CD4-positive, alpha-beta T cell (primary cell): ENCODE measurements at regions of chr19 and their contacts with region 1.

Region 1: DNA sequence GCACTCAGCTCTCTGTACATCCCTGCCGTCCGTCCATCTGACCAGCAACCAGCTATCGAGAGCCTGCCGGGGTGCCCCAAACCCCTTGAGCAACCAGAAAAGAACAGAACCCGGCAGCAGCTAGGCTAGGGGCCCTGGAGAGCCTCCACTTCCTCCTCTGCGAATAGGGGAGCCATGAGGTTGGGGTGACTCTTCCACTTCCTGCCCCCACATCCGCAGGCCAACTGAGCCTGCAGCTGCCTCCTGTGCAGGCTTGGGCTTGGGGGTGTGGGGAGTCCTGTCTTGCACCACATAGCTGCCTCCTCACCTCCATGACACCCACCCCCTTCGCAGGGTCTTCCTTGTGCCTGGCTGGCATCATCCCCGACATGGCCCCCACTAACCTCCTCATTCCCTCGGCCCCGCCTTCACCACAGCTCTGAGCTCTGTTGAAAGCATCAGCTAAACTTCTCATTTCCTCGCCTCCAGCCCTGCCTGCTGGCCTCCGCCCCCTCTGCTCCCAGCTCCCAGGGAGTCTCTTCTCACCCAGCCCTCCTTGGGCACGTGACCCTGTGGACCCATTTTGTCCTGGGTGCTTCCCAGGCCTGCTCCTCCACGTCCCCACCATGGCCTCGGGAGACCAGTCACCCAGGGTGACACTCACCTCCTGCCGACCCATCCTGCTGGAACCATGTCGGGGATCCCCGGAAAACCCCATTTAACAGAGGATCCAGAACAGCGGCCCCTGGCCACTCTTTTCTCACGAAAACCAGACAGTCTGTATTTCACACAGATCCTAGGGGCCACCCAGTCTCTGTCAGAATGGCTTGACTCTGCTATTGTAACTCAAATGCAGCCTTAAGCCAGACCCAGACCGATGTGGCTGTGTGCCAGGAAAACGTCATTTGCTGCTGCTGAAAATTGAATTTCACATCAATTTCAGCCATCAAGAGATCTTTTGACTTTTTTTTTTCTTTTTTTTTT is 50.4 kb downstream of the MYO9B start:
- DNase-seq: peak; percentile 55 to 91 (median 74)
- ATAC-seq: peak; percentile 85
- H3K4me3 ChIP-seq: peak overlapping the region; percentile 39
- H3K4me3 Mint-ChIP-seq: peak overlapping the region; percentile 86
- H3K27ac ChIP-seq: peak overlapping the region; percentile 86 to 87
- H3K27ac Mint-ChIP-seq: peak overlapping the region; percentile 97
- H3K4me1 ChIP-seq: peaks cover 54% of the 10 kb centered on the region
- H3K4me1 Mint-ChIP-seq: peaks cover 51% of the 10 kb centered on the region
- H3K27me3 ChIP-seq: no peaks in the 10 kb centered on the region
- H3K27me3 Mint-ChIP-seq: no peaks in the 10 kb centered on the region
- CTCF ChIP-seq: no peak

Region 2: GRCh38 chr19:17090583-17090982 is 35.4 kb before region 1 on chr19:
- CTCF ChIA-PET with region 1: no interaction called
- POLR2A ChIA-PET with region 1: interaction called, 3 read pairs
- intact Hi-C with region 1: loop called in 1 of 2 experiments (anchors 5 kb)
- DNase-seq: peak in 3 of 14 experiments; percentile 32 to 76 (median 67)
- ATAC-seq: peak; percentile 52
- H3K4me3 ChIP-seq: no peak overlapping the region
- H3K4me3 Mint-ChIP-seq: peak overlapping the region; percentile 25
- H3K27ac ChIP-seq: no peak overlapping the region
- H3K27ac Mint-ChIP-seq: peak overlapping the region; percentile 79
- H3K4me1 ChIP-seq: peaks cover 41% of the 10 kb centered on the region
- H3K4me1 Mint-ChIP-seq: peaks cover 53% of the 10 kb centered on the region
- H3K27me3 ChIP-seq: no peaks in the 10 kb centered on the region
- H3K27me3 Mint-ChIP-seq: no peaks in the 10 kb centered on the region
- CTCF ChIP-seq: no peak

Region 3: DNA sequence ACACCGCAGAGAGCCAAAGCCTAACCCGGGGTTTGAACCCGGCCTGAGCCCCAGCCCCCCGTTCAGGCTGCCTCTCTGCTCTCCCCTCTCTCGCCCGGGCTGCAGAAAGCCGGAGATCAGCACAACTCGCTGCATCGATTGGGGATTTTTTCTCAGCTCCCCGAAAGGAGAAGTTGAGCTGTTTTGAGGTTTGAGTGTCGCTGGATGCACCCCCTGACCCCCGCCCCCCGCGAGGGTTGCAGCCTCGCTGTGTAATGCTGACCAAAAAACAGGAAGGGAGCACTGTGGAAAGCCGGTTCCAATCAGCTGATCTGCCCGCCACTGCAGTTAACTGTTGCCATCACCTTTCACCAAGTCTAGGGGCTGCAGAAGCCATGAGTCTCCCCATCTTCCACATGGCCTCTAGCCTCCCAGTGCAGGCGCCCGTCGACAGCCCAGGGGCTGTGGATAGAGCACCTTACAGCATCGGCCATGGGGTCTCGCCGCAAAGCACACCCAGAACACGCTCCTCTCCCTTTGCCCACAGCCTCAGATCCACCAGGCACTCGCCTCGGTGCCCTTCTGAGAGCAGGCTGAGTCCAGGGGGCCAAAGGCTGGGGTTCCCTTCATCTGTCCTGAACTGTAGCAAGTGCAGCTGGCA is 15.9 kb before region 1 on chr19:
- CTCF ChIA-PET with region 1: no interaction called
- POLR2A ChIA-PET with region 1: interaction called, 10 read pairs
- intact Hi-C with region 1: no loop called
- DNase-seq: peak in 3 of 14 experiments; percentile 43 to 70 (median 65)
- ATAC-seq: peak; percentile 37
- H3K4me3 ChIP-seq: no peak overlapping the region
- H3K4me3 Mint-ChIP-seq: no peak overlapping the region
- H3K27ac ChIP-seq: peak overlapping the region in 1 of 2 donors; percentile 21
- H3K27ac Mint-ChIP-seq: peak overlapping the region; percentile 75
- H3K4me1 ChIP-seq: peaks cover 45% of the 10 kb centered on the region
- H3K4me1 Mint-ChIP-seq: peaks cover 24% of the 10 kb centered on the region
- H3K27me3 ChIP-seq: no peaks in the 10 kb centered on the region
- H3K27me3 Mint-ChIP-seq: no peaks in the 10 kb centered on the region
- CTCF ChIP-seq: no peak

Region 4: DNA sequence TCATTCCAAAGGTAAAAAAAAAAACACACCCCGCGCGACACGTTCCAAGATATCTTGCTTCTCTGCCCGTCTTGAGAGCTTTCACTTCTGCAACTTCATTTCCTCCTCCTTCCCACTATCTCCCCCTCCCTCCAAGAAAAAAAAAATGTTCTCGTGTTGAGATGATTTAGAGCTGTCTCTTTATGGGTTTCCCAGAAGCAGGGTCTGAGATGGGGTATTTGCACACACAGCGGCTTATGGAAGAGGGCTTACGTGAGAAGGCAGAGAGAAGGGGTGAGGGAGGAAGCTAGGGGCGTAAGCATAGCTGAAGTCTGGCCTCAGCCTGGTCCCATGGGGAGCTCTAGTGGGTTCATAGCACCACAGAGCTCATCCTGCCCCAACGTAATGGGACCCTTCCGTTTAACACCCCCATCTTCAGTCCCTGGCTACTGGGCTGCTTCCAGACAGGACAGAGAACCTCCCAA is 57.9 kb after region 1 on chr19:
- CTCF ChIA-PET with region 1: no interaction called
- POLR2A ChIA-PET with region 1: interaction called, 47 read pairs
- intact Hi-C with region 1: loop called in 1 of 2 experiments (anchors 10 kb)
- DNase-seq: peak in 6 of 14 experiments; percentile 7 to 63 (median 46)
- ATAC-seq: peak; percentile 57
- H3K4me3 ChIP-seq: peak overlapping the region; percentile 41
- H3K4me3 Mint-ChIP-seq: peak overlapping the region; percentile 83
- H3K27ac ChIP-seq: peak overlapping the region; percentile 46 to 82
- H3K27ac Mint-ChIP-seq: peak overlapping the region; percentile 89
- H3K4me1 ChIP-seq: peaks cover 35% of the 10 kb centered on the region
- H3K4me1 Mint-ChIP-seq: peaks cover 19% of the 10 kb centered on the region
- H3K27me3 ChIP-seq: no peaks in the 10 kb centered on the region
- H3K27me3 Mint-ChIP-seq: no peaks in the 10 kb centered on the region
- CTCF ChIP-seq: no peak

Region 5: GRCh38 chr19:17226002-17226933 is 100.3 kb after region 1 on chr19 and contains the start of gene OCEL1:
- CTCF ChIA-PET with region 1: no interaction called
- POLR2A ChIA-PET with region 1: interaction called, 11 read pairs
- intact Hi-C with region 1: no loop called
- DNase-seq: peak; percentile 90 to 99 (median 96)
- ATAC-seq: peak; percentile 88
- H3K4me3 ChIP-seq: peak within 1 kb of the TSS; percentile 61
- H3K4me3 Mint-ChIP-seq: peak within 1 kb of the TSS; percentile 95
- H3K27ac ChIP-seq: peak within 1 kb of the TSS; percentile 70 to 84
- H3K27ac Mint-ChIP-seq: peak within 1 kb of the TSS; percentile 90
- H3K4me1 ChIP-seq: peaks cover 24% of the 10 kb centered on the region
- H3K4me1 Mint-ChIP-seq: peaks cover 4% of the 10 kb centered on the region
- H3K27me3 ChIP-seq: no peaks in the 10 kb centered on the region
- H3K27me3 Mint-ChIP-seq: no peaks in the 10 kb centered on the region
- CTCF ChIP-seq: no peak
- total RNA-seq, gene OCEL1: 20.5 to 22.2 TPM

Region 6: GRCh38 chr19:17457616-17458015 is 331.6 kb after region 1 on chr19:
- CTCF ChIA-PET with region 1: no interaction called
- POLR2A ChIA-PET with region 1: no interaction called
- intact Hi-C with region 1: no loop called
- DNase-seq: no peak
- ATAC-seq: no peak
- H3K4me3 ChIP-seq: no peak overlapping the region
- H3K4me3 Mint-ChIP-seq: no peak overlapping the region
- H3K27ac ChIP-seq: no peak overlapping the region
- H3K27ac Mint-ChIP-seq: no peak overlapping the region
- H3K4me1 ChIP-seq: peaks cover 11% of the 10 kb centered on the region
- H3K4me1 Mint-ChIP-seq: peaks cover 13% of the 10 kb centered on the region
- H3K27me3 ChIP-seq: peaks cover 28 to 36% of the 10 kb centered on the region in 2 experiments
- H3K27me3 Mint-ChIP-seq: peaks cover 51% of the 10 kb centered on the region
- CTCF ChIP-seq: no peak